Psoas muscle (tissue), 8 donors: ENCODE measurements at regions of chr10 and their contacts with region 1.

Region 1: DNA sequence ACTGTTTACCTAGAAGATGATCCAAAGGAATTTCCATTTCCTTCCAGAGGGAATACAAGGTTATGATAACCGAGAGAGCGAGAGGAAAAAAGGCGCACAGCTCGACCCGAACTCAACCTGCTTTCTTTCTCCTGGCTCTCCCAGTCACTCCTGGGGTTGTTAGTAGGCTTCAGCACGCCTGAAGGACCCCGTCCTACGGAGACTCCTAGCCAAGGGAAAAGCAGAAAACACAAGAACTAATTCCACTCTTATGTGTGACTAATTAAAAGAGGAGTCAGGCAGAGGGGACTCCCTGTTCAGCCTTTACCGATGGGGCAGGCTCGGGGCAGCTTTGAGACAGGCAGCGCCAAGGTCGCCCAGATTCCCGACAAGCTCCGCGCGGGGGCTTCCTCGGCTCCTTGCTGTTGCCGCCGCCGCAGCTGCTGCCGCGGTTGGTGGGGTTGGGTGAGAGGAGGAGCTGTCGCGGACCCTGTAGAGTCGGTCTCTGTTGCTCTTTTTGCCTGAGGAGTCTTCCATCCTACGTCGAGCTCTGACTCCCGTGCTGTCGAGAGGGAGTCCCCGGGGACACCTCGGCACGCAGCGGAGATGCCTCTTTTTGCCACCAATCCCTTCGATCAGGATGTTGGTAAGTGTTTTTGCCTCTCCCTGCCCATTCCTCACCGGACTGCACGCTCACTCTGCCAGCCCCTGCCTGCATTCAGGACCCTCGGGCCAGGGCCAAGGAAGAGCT is at the start of gene STAM:
- DNase-seq: peak; percentile 92 to 96
- ATAC-seq: peak; percentile 88 to 92 (median 90)
- H3K4me3 ChIP-seq: peak within 1 kb of the TSS; percentile 90
- H3K27ac ChIP-seq: peak within 1 kb of the TSS; percentile 99
- H3K4me1 ChIP-seq: peaks cover 33% of the 10 kb centered on the region
- H3K27me3 ChIP-seq: no peaks in the 10 kb centered on the region
- CTCF ChIP-seq: no peak
- total RNA-seq, gene STAM: 22.1 to 42.4 (median 36.1) TPM

Region 2: GRCh38 chr10:17673456-17674061 is 29.6 kb after region 1 on chr10:
- intact Hi-C with region 1: loop called in 1 of 2 experiments (anchors 2 kb)
- DNase-seq: no peak
- ATAC-seq: peak; percentile 58 to 67 (median 62)
- H3K4me3 ChIP-seq: no peak overlapping the region
- H3K27ac ChIP-seq: peak overlapping the region; percentile 78
- H3K4me1 ChIP-seq: peaks cover 56% of the 10 kb centered on the region
- H3K27me3 ChIP-seq: no peaks in the 10 kb centered on the region
- CTCF ChIP-seq: no peak

Region 3: DNA sequence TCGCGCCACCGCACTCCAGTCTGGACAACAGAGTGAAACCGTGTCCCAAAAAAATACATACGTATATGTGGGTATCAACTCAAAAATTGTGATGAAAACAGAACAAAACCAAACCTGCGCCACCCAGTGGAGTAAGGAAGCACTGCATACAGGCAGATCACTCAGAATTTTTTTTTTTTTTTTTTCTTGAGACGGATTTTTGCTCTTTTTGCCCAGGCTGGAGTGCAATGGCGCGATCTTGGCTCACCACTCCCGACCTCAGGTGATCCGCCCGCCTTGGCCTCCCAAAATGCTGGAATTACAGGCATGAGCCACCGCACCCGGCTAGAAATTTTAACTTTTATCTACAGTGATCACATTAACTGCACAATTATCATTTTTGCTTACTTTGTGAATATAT is 99.0 kb after region 1 on chr10:
- intact Hi-C with region 1: no loop called
- DNase-seq: peak; percentile 58 to 68
- ATAC-seq: peak in 2 of 4 donors; percentile 29 to 57
- H3K4me3 ChIP-seq: no peak overlapping the region
- H3K27ac ChIP-seq: no peak overlapping the region
- H3K4me1 ChIP-seq: peaks cover 17% of the 10 kb centered on the region
- H3K27me3 ChIP-seq: no peaks in the 10 kb centered on the region
- CTCF ChIP-seq: peak; percentile 82